ENCODE measurements at regions of chr3 and their contacts with region 1.

Region 1: GRCh38 chr3:137013955-137014688 is 56.3 kb downstream of the IL20RB start:
- DNase-seq: peak; percentile 83
- ATAC-seq: peak; percentile 97
- H3K4me3 ChIP-seq: peak overlapping the region; percentile 40 to 84
- H3K27ac ChIP-seq: peak overlapping the region; percentile 55
- H3K4me1 ChIP-seq: peaks cover 3% of the 10 kb centered on the region
- H3K27me3 ChIP-seq: no peaks in the 10 kb centered on the region
- CTCF ChIP-seq: peak; percentile 92

Region 2: GRCh38 chr3:136350132-136350531 is 664.0 kb before region 1 on chr3:
- CTCF ChIA-PET with region 1: no interaction called
- POLR2A ChIA-PET with region 1: no interaction called
- in situ Hi-C with region 1: no loop called
- intact Hi-C with region 1: loop called (anchors 10 kb)
- DNase-seq: no peak
- ATAC-seq: no peak
- H3K4me3 ChIP-seq: no peak overlapping the region
- H3K27ac ChIP-seq: no peak overlapping the region
- H3K4me1 ChIP-seq: no peaks in the 10 kb centered on the region
- H3K27me3 ChIP-seq: no peaks in the 10 kb centered on the region
- CTCF ChIP-seq: no peak

Region 3: GRCh38 chr3:136772709-136773108 is 241.4 kb before region 1 on chr3:
- CTCF ChIA-PET with region 1: interaction called, 12 read pairs
- POLR2A ChIA-PET with region 1: no interaction called
- in situ Hi-C with region 1: no loop called
- intact Hi-C with region 1: no loop called
- DNase-seq: no peak
- ATAC-seq: no peak
- H3K4me3 ChIP-seq: no peak overlapping the region
- H3K27ac ChIP-seq: no peak overlapping the region
- H3K4me1 ChIP-seq: no peaks in the 10 kb centered on the region
- H3K27me3 ChIP-seq: no peaks in the 10 kb centered on the region
- CTCF ChIP-seq: no peak

Region 4: DNA sequence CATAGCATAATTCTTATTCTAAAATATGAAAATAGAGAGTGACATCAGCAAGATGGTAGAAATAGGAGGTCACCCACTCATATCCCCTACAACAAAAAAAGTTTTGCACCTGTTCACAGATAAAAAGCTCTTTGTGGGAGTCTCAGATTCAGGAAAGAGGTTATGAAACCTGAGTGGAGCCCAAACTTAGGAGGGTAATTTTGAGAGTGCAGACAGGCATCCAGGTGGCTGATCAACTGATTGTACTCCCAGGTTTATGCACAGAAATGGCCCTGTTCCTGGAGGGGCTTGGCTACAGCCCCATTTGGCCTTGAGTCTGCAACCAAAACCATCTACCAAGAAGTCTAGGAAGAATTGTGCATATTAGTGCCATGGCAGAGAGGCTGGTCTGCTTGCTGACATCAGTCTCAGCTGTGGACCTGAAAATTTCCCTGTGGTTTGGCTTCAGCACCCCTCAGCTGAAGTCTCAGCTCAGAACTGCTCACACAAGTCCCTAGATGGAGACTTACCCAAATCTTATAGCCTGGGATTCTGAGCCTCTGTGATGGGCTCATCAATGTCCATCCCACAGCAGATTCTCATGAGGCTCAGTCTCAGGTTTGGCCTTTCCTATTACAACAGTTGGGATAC is 235.3 kb after region 1 on chr3:
- CTCF ChIA-PET with region 1: no interaction called
- POLR2A ChIA-PET with region 1: no interaction called
- in situ Hi-C with region 1: no loop called
- intact Hi-C with region 1: no loop called
- DNase-seq: no peak
- ATAC-seq: no peak
- H3K4me3 ChIP-seq: no peak overlapping the region
- H3K27ac ChIP-seq: no peak overlapping the region
- H3K4me1 ChIP-seq: no peaks in the 10 kb centered on the region
- H3K27me3 ChIP-seq: no peaks in the 10 kb centered on the region
- CTCF ChIP-seq: no peak

Measured in Panc1 (cell line).